Activated CD4-positive, alpha-beta memory T cell treated with anti-CD3 and anti-CD28 coated beads for 36 hours (primary cell): ENCODE measurements at regions of chr22 and their contacts with region 1.

Region 1: GRCh38 chr22:36350751-36351594 is 36.8 kb downstream of the MYH9 start:
- DNase-seq: no peak
- H3K4me3 Mint-ChIP-seq: no peak overlapping the region
- H3K27ac Mint-ChIP-seq: peak overlapping the region; percentile 94
- H3K4me1 Mint-ChIP-seq: peaks cover 88% of the 10 kb centered on the region
- H3K27me3 Mint-ChIP-seq: no peaks in the 10 kb centered on the region

Region 2: DNA sequence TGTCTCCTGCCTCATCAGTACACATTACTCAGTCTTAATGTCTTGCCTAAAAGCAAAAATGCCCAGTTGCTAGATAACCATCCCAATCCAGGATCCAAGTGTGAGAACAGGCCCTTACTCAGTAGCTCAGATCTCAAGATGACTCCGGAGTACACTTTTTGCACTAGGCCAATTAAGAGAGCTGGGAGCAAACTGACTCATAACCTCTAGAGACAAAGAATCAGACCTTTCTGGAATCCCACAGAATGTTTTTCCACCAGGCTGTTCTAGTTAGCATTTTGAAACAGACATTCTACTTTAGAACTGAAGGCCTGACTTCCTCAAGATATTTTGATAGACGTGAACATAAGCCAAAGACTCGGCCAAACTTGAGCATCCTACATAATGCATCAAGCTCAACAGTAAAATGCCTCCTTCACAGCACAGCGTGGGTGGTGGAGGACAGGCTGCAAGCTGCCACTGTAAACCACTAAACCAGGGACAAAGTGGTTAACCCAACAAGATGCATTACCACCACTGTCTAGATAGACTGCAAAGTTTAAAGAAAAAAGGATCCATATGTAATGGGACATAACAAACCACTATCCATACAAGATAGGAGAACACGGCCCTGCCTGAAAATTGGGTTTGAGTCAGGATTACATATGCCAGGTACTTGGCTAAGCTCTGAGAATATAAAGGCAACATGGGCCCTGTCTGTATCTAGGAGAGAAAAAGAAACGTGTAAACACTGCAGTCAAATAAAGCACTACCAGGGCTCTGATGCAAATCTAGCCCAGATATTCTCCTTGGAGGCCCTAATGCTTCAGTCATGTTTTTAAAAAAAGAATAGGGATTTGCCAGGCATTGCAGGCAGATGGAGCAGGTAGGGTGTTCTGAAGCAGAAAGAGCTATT is 11.6 kb before region 1 on chr22:
- CTCF ChIA-PET with region 1: interaction called, 6 read pairs
- POLR2A ChIA-PET with region 1: interaction called, 10 read pairs
- intact Hi-C with region 1: loop called (anchors 1 kb)
- DNase-seq: peak; percentile 67
- H3K4me3 Mint-ChIP-seq: peak overlapping the region; percentile 9
- H3K27ac Mint-ChIP-seq: peak overlapping the region; percentile 89
- H3K4me1 Mint-ChIP-seq: peaks cover 97% of the 10 kb centered on the region
- H3K27me3 Mint-ChIP-seq: no peaks in the 10 kb centered on the region

Region 3: DNA sequence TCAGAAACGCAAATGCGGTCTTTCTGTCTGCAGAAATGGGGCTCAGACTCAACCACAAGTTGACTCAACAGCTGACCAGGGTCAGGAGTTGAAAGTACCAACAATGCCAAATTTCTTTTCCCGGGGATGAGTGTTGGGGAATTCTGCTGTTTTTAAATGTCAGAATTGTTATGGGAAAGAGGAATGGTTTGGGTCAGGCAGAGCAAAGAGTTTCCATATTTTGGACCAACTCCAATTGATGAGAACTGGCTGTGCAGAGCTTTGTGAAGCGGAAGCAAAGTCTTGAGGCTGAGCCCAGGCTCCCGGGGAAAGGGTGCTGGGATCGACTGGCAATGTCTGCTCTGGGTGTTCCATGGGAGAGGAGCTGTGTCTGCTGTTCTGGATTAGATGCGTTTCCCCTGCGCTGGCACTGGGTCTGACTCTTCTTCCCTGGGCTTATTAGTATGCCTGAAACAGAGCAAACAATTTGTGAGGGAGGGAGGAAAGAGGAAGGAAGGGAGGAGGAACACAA is 94.2 kb after region 1 on chr22:
- CTCF ChIA-PET with region 1: no interaction called
- POLR2A ChIA-PET with region 1: no interaction called
- intact Hi-C with region 1: no loop called
- DNase-seq: no peak
- H3K4me3 Mint-ChIP-seq: no peak overlapping the region
- H3K27ac Mint-ChIP-seq: peak overlapping the region; percentile 28
- H3K4me1 Mint-ChIP-seq: peaks cover 14% of the 10 kb centered on the region
- H3K27me3 Mint-ChIP-seq: no peaks in the 10 kb centered on the region